A549 (cell line): ENCODE measurements at regions of chr5 and their contacts with region 1.

Region 1: GRCh38 chr5:170100066-170100943 is 5.4 kb upstream of the FOXI1 start:
- DNase-seq: peak; percentile 54 to 78
- ATAC-seq: peak; percentile 80 to 90
- H3K4me3 ChIP-seq: no peak overlapping the region
- H3K27ac ChIP-seq: peak overlapping the region in 1 of 2 experiments; percentile 67; a peak in 3 of 6 replicates
- H3K4me1 ChIP-seq: peaks cover 7% of the 10 kb centered on the region; the same call in 1 of the 3 replicates
- CTCF ChIP-seq: peak; percentile 89
- EP300 ChIP-seq: no peak
- POLR2A ChIP-seq: no peak
- RAD21 ChIP-seq: peak; percentile 95 to 98

Region 2: GRCh38 chr5:170070556-170071412 is 29.5 kb before region 1 on chr5:
- CTCF ChIA-PET with region 1: interaction called, 22 read pairs
- POLR2A ChIA-PET with region 1: no interaction called
- DNase-seq: peak; percentile 45 to 52
- ATAC-seq: peak; percentile 70 to 97; a peak in 3 of 6 replicates
- H3K4me3 ChIP-seq: no peak overlapping the region
- H3K27ac ChIP-seq: no peak overlapping the region
- H3K4me1 ChIP-seq: no peaks in the 10 kb centered on the region
- CTCF ChIP-seq: peak; percentile 77
- EP300 ChIP-seq: no peak
- POLR2A ChIP-seq: no peak
- RAD21 ChIP-seq: peak; percentile 56 to 57

Region 3: DNA sequence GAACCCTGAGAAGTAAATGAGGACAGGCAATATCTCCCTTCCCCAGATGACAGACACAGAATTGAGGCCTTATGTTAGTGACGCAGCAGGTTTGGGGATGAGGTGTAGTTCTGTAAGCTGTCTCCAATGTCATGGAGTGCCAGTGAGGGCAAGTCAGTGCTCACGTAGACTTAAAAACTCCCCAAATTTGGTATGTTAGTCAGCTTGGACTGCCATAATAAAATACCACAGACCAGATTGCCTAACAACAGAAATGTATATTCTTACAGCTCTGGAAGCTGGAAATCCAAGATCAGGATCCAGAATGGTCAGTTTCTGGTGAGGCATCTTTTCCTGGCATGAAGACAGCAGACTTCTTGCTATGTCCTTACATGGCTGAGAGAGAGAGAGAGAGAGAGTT is 20.3 kb after region 1 on chr5:
- CTCF ChIA-PET with region 1: interaction called, 63 read pairs
- POLR2A ChIA-PET with region 1: no interaction called
- DNase-seq: no peak
- ATAC-seq: no peak
- H3K4me3 ChIP-seq: no peak overlapping the region
- H3K27ac ChIP-seq: no peak overlapping the region
- H3K4me1 ChIP-seq: no peaks in the 10 kb centered on the region
- CTCF ChIP-seq: no peak
- EP300 ChIP-seq: no peak
- POLR2A ChIP-seq: no peak
- RAD21 ChIP-seq: no peak

Region 4: GRCh38 chr5:170166101-170166500 is 65.8 kb after region 1 on chr5:
- CTCF ChIA-PET with region 1: interaction called, 691 read pairs
- POLR2A ChIA-PET with region 1: no interaction called
- DNase-seq: no peak
- ATAC-seq: no peak
- H3K4me3 ChIP-seq: no peak overlapping the region
- H3K27ac ChIP-seq: no peak overlapping the region
- H3K4me1 ChIP-seq: no peaks in the 10 kb centered on the region
- CTCF ChIP-seq: no peak
- EP300 ChIP-seq: no peak
- POLR2A ChIP-seq: no peak
- RAD21 ChIP-seq: no peak

Region 5: GRCh38 chr5:170206216-170206615 is 105.9 kb after region 1 on chr5:
- CTCF ChIA-PET with region 1: interaction called, 32 read pairs
- POLR2A ChIA-PET with region 1: no interaction called
- DNase-seq: no peak
- ATAC-seq: no peak
- H3K4me3 ChIP-seq: no peak overlapping the region
- H3K27ac ChIP-seq: no peak overlapping the region
- H3K4me1 ChIP-seq: peaks cover 3% of the 10 kb centered on the region; the same call in 2 of the 3 replicates
- CTCF ChIP-seq: no peak
- EP300 ChIP-seq: no peak
- POLR2A ChIP-seq: no peak
- RAD21 ChIP-seq: no peak